Activated CD4-positive, alpha-beta T cell treated with anti-CD3 and anti-CD28 coated beads for 36 hours (primary cell): ENCODE measurements at regions of chr1 and their contacts with region 1.

Region 1: DNA sequence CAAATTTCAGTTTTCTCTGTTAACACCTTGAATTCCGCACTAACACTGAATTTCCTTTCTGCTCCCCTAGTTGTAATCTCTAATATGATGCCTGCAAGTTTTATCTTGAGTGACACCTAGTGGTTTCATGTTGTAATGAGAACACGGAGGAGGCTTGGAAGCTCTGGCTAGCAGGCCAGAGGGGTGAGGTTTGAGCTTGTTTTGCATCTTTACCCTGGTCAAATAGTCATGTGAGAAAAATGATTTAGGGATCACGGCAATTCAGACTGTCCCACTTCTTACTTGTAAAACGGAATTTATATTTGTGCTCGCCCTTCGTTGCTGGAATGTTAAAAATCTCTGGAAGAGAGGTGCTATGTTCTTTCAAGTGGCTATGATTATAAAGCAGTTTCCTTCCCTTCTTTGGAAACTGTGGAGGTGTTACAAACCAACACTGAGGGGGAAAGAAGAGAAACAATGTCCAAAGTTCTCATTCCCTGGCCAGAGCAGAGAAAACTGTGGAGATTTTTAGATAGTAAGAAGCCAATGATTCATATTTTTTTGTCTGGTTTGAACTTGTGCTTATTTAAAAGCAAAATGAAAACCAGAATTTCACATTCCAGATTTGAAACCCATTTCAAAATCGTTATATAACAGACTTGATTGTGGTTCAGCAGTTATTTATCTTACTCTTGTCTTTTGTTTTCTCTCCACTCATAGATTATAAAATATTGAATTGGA is 5.3 kb upstream of the MROH9 start:
- DNase-seq: peak; percentile 24
- ATAC-seq: peak; percentile 90
- H3K4me3 Mint-ChIP-seq: no peak overlapping the region
- H3K27ac Mint-ChIP-seq: no peak overlapping the region
- H3K4me1 Mint-ChIP-seq: no peaks in the 10 kb centered on the region
- H3K27me3 Mint-ChIP-seq: peaks cover 4% of the 10 kb centered on the region

Region 2: DNA sequence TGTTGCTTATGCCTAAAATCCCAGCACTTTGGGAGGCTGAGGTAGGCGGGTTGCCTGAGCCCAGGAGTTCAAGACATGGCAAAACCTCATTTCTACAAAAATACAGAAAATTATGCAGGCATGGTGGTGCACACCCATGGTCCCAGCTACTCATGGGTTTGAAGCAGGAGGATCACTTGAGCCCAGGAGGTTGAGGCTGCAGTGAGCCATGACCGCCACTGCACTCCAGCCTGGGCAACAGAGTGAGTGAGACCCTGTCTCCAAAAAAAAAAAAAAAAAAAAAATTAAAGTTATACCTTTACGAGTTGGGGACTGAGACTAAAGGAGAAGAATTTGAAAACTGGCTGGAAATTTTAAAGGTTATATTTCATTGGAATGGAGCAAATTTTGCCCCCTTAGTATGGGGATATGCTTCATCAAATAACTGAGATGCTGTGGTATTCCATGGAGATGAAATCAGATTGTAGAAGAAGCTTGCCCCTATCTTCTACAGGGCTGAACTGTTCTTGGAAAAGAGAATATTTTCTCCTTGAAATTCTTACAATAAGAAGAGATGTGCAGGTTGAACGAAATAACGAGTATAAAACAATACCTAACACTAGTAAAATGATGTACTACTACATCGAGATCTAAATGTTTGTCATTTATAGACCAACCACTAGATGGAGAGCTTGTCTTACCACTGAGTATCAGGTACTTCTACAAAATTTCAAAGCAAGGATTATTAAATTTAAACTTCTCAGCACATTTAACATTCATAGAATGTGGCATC is 1001.4 kb before region 1 on chr1:
- CTCF ChIA-PET with region 1: interaction called, 4 read pairs
- POLR2A ChIA-PET with region 1: no interaction called
- intact Hi-C with region 1: loop called in 1 of 2 experiments (anchors 1 kb)
- DNase-seq: no peak
- ATAC-seq: peak; percentile 65
- H3K4me3 Mint-ChIP-seq: no peak overlapping the region
- H3K27ac Mint-ChIP-seq: no peak overlapping the region
- H3K4me1 Mint-ChIP-seq: peaks cover 4% of the 10 kb centered on the region
- H3K27me3 Mint-ChIP-seq: no peaks in the 10 kb centered on the region

Region 3: DNA sequence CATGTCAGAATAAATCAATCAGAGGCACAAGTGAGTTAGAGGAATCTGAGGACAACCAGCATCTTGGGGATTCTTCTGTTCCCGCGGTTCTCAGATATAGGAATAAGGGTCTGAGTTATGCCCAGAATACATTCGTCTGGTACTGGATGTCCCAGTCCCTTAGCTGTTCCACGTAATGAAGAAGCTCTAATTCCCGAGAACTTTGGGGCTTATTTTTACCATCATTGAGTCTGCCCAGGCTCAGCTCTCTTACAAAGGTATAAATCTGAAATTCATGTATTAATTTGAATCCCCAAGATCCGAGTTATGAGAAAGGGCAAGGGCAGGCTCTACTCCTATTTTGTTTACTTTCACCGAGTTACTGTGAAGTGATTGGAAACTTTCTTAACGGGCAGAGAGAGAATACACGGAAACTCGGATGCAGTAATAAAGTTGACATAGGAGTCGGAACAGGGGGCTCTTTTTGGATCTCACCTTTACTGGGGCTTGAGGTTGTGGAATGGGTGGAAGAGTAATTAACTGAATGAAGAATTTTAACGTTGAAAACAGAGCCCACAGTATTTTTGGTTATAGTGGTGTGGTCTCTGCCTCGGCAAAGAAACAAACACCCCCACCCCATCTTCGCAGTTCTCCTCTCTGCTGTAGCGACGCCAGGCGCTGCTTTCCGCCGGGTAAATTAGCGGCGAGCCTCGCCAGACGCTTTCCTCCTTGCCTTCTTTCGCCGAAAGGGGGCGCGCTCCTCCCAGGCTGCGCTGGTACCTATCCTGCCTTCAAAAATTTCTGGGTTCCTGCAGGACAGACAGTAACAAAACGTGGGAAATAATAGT is 259.0 kb before region 1 on chr1:
- CTCF ChIA-PET with region 1: no interaction called
- POLR2A ChIA-PET with region 1: no interaction called
- intact Hi-C with region 1: loop called in 1 of 2 experiments (anchors 5 kb)
- DNase-seq: peak; percentile 74
- ATAC-seq: no peak
- H3K4me3 Mint-ChIP-seq: no peak overlapping the region
- H3K27ac Mint-ChIP-seq: no peak overlapping the region
- H3K4me1 Mint-ChIP-seq: peaks cover 15% of the 10 kb centered on the region
- H3K27me3 Mint-ChIP-seq: peaks cover 70% of the 10 kb centered on the region

Region 4: GRCh38 chr1:170685166-170685565 is 244.8 kb before region 1 on chr1:
- CTCF ChIA-PET with region 1: interaction called, 14 read pairs
- POLR2A ChIA-PET with region 1: no interaction called
- intact Hi-C with region 1: loop called (anchors 1 to 2 kb)
- DNase-seq: no peak
- ATAC-seq: no peak
- H3K4me3 Mint-ChIP-seq: no peak overlapping the region
- H3K27ac Mint-ChIP-seq: no peak overlapping the region
- H3K4me1 Mint-ChIP-seq: peaks cover 5% of the 10 kb centered on the region
- H3K27me3 Mint-ChIP-seq: peaks cover 26% of the 10 kb centered on the region

Region 5: DNA sequence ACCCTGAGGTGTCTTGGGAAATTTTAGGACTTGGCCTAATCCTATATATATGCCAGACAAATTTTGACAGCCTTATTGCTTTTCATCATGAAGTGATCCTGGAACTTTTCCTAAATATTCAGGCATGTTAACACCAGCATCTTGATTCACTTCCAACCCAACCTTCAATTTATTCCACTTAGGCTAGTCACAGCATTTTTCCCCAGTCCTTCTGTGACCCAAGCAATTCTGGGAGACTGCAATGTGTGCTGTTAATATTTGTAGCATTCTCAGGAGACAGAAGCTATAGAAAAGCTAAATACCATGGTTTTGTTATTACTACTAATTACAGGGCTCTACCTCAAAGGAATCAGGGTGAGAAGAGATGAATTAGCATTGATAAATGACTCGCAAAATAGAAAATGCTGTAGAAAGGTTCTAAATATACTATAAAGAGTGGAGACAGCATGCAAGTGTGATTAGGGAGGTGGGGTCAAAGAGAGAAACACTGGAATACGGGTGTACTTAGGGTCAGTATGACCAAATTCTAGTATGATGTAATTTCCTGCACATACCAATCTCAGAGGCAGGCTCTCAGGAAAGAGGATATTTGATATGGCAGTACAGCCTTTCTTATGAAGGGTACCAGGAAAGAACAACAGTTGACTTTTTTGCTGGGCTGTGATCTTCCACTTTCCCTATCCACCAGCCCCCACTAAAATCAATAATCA is 237.0 kb before region 1 on chr1:
- CTCF ChIA-PET with region 1: interaction called, 14 read pairs
- POLR2A ChIA-PET with region 1: no interaction called
- intact Hi-C with region 1: loop called (anchors 1 to 2 kb)
- DNase-seq: no peak
- ATAC-seq: no peak
- H3K4me3 Mint-ChIP-seq: no peak overlapping the region
- H3K27ac Mint-ChIP-seq: no peak overlapping the region
- H3K4me1 Mint-ChIP-seq: peaks cover 5% of the 10 kb centered on the region
- H3K27me3 Mint-ChIP-seq: peaks cover 25% of the 10 kb centered on the region

Region 6: DNA sequence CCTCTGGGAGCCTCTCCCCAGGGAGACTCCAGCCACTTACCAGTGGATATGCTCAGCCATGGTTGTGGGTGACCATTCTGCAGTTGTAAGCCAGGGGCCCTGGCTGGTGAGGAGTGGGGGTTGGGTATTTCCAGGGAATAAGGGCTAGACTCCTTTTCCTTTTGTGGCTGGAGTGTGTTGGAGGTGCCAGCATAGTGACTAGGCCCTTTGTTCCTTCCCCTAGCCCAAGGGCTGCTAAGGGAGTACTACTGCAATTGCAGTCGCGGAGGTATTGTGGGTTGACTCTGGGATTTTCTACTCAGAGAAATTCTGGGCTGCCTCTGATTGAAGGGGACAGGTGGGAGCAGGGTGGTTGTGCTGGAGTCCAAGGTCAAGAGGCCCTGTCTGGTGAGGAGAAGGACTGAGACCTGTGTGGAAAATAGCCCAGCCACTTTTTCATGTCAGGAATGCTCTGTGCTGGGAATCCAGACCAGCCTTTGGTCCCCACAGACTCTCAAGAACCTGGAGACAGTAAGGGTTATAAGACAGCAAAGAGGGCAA is 48.4 kb after region 1 on chr1:
- CTCF ChIA-PET with region 1: no interaction called
- POLR2A ChIA-PET with region 1: no interaction called
- intact Hi-C with region 1: no loop called
- DNase-seq: no peak
- ATAC-seq: no peak
- H3K4me3 Mint-ChIP-seq: no peak overlapping the region
- H3K27ac Mint-ChIP-seq: no peak overlapping the region
- H3K4me1 Mint-ChIP-seq: no peaks in the 10 kb centered on the region
- H3K27me3 Mint-ChIP-seq: no peaks in the 10 kb centered on the region